Posterior vena cava (tissue), 2 donors: ENCODE measurements at regions of chr12 and their contacts with region 1.

Region 1: GRCh38 chr12:104499668-104500332 is 43.1 kb downstream of the CHST11 start:
- DNase-seq: no peak

Region 2: GRCh38 chr12:104546575-104546974 is 46.8 kb after region 1 on chr12:
- intact Hi-C with region 1: loop called in 1 of 2 experiments (anchors 1 kb)
- DNase-seq: no peak